Activated CD4-positive, alpha-beta memory T cell treated with anti-CD3 and anti-CD28 coated beads for 36 hours (primary cell): ENCODE measurements at regions of chr2 and their contacts with region 1.

Region 1: GRCh38 chr2:88055371-88056128 is at the start of gene KRCC1:
- DNase-seq: peak; percentile 96
- H3K4me3 Mint-ChIP-seq: peak within 1 kb of the TSS; percentile 89
- H3K27ac Mint-ChIP-seq: peak within 1 kb of the TSS; percentile 96
- H3K4me1 Mint-ChIP-seq: peaks cover 47% of the 10 kb centered on the region
- H3K27me3 Mint-ChIP-seq: no peaks in the 10 kb centered on the region
- total RNA-seq, gene KRCC1: 10.6 to 11.0 TPM

Region 2: DNA sequence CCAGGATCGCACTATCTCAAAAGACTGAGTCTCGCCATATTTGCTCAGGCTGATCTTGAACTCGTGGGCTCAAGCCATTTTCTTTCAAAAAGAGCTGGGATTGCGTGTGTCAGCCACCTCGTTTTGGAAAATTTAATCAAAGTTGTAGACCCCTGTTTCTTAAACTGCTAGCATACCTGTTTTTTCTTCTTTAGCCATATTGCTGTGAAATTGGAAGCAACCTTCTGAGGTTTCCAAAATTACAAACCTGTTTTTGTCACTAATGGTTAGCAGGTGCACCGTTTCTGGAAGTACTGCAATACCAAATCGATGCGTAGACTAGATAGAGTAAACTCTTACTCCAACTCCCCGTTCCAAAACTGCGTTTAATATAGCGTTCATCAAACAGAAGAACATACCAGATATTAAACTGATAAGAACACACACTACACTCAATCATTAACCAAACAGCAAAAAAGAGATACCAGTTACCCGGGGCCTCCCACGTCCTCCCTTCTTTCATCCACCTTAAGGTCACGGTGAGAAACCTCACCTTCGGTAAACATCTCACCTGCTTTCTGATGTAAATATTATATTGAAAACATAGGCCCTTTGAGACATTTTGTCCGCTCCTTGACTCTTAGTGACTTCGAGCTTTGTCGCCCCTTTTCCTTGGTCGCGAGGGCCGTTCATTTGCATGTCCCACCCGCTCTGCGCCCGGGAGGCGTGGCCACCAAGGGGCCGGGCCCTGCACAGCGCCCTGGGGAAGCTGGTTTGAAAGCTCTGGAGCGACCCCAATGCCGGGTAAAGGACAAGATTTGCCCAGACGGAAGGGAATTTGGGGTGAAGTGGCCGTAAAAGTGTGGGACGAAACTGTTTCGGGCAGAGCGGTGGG is 39.2 kb before region 1 on chr2 and contains the start of gene RNU2-63P:
- CTCF ChIA-PET with region 1: interaction called, 9 read pairs
- POLR2A ChIA-PET with region 1: interaction called, 20 read pairs
- intact Hi-C with region 1: loop called (anchors 1 kb)
- DNase-seq: peak; percentile 80
- H3K4me3 Mint-ChIP-seq: peak within 1 kb of the TSS; percentile 88
- H3K27ac Mint-ChIP-seq: peak within 1 kb of the TSS; percentile 98
- H3K4me1 Mint-ChIP-seq: peaks cover 17% of the 10 kb centered on the region
- H3K27me3 Mint-ChIP-seq: no peaks in the 10 kb centered on the region
- total RNA-seq, gene RNU2-63P: 14.4 to 25.7 TPM

Region 3: GRCh38 chr2:88069117-88069516 is 13.6 kb after region 1 on chr2:
- CTCF ChIA-PET with region 1: interaction called, 10 read pairs
- POLR2A ChIA-PET with region 1: no interaction called
- intact Hi-C with region 1: no loop called
- DNase-seq: no peak
- H3K4me3 Mint-ChIP-seq: no peak overlapping the region
- H3K27ac Mint-ChIP-seq: no peak overlapping the region
- H3K4me1 Mint-ChIP-seq: no peaks in the 10 kb centered on the region
- H3K27me3 Mint-ChIP-seq: no peaks in the 10 kb centered on the region

Region 4: DNA sequence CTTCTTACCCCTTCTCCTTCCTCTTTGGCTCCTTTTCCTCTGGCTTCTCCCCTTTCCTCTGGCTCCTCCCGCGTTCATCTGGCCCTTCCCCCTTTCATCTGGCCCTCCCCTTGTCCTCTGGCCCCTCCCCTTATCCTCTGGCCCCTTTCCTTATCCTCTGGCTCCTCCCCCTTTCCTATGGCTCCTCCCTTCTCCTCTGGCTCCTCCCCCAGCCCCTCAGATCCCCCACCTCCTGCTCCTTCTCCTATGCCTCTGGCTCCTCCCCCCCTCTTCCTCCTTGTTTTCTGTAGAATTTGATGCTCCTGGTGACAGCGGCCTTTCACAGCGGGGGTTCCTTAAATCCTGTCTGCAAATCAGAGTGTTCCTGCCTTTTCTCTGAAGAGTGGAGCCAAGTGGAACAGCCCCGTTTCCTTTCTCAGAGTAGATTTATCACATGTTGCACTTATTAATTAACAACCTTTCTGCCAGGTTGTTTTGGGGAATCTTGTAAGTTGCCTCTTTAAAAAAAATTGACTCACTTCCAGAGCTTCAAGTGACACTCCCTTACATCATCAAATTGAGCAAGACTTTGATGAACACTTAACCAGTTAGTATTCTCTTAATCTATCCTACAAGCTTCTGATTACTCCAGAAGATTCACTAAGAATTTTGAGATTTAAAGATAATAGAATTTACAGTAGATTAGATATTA is 44.4 kb after region 1 on chr2:
- CTCF ChIA-PET with region 1: interaction called, 11 read pairs
- POLR2A ChIA-PET with region 1: no interaction called
- intact Hi-C with region 1: no loop called
- DNase-seq: no peak
- H3K4me3 Mint-ChIP-seq: no peak overlapping the region
- H3K27ac Mint-ChIP-seq: no peak overlapping the region
- H3K4me1 Mint-ChIP-seq: no peaks in the 10 kb centered on the region
- H3K27me3 Mint-ChIP-seq: peaks cover 1% of the 10 kb centered on the region

Region 5: DNA sequence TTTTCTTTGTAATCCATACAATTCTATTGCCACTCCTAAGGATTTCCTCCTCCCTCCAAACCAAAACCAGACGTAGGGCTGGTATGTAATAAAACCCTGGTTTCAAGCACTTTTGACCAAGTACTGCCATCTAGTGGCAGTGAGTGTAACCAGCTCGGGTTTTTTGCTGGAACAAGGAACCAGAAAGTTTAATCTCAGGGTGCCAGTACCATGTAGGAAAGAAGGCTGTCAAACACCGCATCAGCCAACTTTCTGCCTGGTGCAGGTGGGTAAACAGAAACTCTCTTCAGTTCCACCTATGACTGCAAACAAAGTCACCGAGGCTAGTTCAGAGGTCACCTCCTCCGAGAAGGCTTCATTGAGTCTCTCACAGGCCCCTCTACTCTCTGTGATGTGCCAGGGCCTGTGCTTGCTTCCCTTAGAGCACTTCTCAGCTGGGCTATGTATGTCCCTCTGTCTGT is 104.4 kb after region 1 on chr2:
- CTCF ChIA-PET with region 1: interaction called, 215 read pairs
- POLR2A ChIA-PET with region 1: no interaction called
- intact Hi-C with region 1: loop called (anchors 1 kb)
- DNase-seq: peak; percentile 53
- H3K4me3 Mint-ChIP-seq: no peak overlapping the region
- H3K27ac Mint-ChIP-seq: no peak overlapping the region
- H3K4me1 Mint-ChIP-seq: no peaks in the 10 kb centered on the region
- H3K27me3 Mint-ChIP-seq: no peaks in the 10 kb centered on the region

Region 6: GRCh38 chr2:88187038-88187676 is 131.6 kb after region 1 on chr2:
- CTCF ChIA-PET with region 1: interaction called, 8 read pairs
- POLR2A ChIA-PET with region 1: no interaction called
- intact Hi-C with region 1: loop called (anchors 1 kb)
- DNase-seq: peak; percentile 61
- H3K4me3 Mint-ChIP-seq: no peak overlapping the region
- H3K27ac Mint-ChIP-seq: no peak overlapping the region
- H3K4me1 Mint-ChIP-seq: peaks cover 1% of the 10 kb centered on the region
- H3K27me3 Mint-ChIP-seq: peaks cover 11% of the 10 kb centered on the region

Region 7: DNA sequence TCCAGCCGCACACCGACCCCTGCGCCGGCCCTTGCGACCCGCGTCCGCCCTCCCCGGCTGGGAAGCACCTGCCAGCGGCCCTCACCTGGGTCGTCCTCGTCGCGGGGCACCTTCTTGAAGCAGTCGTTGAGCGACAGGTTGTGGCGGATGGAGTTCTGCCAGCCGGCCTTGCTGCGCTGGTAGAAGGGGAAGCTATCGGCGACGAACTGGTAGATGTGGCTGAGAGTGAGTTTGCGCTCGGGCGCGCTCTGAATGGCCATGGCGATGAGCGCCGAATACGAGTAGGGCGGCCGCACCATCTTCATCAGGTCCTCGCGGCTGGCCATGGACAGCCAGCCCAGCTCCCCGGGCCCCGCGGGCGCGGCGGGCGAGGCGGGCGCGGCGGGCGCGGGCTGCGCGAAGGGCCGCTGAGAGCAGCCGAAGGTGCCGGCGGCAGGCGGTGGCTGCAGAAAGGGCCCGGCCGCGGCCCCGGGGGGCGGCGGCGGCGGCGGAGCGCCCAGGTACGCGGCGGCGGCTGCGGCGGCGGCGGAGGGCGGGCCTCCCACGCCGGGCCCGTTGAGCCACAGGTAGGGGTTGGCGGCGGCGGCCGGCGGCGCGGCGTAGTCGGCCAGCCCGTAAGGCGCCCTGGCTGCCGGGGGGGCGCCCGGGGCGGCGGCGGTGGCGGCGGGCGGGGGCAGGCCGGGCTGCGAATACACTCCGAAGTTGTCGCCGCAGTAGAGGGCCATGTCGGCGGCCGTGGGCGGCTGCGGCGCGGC is 396.4 kb after region 1 on chr2:
- CTCF ChIA-PET with region 1: interaction called, 5 read pairs
- POLR2A ChIA-PET with region 1: no interaction called
- intact Hi-C with region 1: loop called (anchors 10 kb)
- DNase-seq: peak; percentile 28
- H3K4me3 Mint-ChIP-seq: peak overlapping the region; percentile 35
- H3K27ac Mint-ChIP-seq: no peak overlapping the region
- H3K4me1 Mint-ChIP-seq: peaks cover 11% of the 10 kb centered on the region
- H3K27me3 Mint-ChIP-seq: peaks cover 46% of the 10 kb centered on the region